Right cardiac atrium (tissue), 5 donors: ENCODE measurements at regions of chr3 and their contacts with region 1.

Region 1: GRCh38 chr3:73502609-73503583 is 121.8 kb downstream of the PDZRN3 start:
- DNase-seq: peak; percentile 73 to 78 (median 75)
- ATAC-seq: peak; percentile 48 to 75
- H3K4me3 ChIP-seq: no peak overlapping the region
- H3K27ac ChIP-seq: no peak overlapping the region
- H3K4me1 ChIP-seq: peaks cover 2% of the 10 kb centered on the region
- H3K27me3 ChIP-seq: no peaks in the 10 kb centered on the region

Region 2: DNA sequence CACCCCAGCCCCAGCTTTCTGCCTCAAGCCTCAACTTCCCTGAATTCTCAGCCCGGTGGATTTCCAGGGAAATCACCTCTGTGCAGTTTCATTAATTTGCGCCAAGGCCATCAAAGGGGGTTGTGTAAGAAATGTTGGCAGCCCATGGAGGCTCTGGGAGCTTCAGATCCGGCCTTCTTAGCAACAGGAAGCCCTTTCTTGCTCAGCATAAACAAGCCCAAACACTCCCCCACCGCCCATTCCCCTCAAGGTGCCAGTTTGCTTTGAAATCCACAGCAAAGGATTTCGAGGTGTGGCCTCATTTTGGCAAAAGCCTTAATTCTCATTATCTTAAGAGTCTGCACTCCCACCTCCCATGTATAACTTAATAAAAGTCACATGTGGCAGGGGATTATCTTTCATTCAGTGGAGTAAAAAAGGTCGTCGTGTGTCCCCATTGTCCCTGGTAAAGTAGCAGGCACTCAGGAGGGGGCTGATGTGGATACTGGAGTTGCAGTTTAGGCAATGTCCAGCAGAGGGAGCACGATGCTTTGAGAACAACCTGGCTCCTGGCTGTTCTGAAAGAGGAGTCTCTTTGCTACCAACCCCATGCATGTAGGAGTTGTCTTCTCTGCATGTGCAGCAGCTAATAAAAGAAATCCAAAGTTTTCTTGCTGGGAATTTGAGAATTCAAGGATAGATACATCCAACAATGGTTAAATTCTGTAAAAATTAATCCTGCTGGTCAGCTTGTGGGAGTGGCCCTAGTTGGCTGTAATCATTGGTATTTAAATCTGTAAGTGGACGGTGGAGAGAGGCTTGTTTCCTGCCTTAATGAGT is 401.9 kb before region 1 on chr3:
- intact Hi-C with region 1: loop called (anchors 2 to 10 kb)
- DNase-seq: peak; percentile 80 to 89 (median 81)
- ATAC-seq: peak; percentile 85 to 87
- H3K4me3 ChIP-seq: no peak overlapping the region
- H3K27ac ChIP-seq: no peak overlapping the region
- H3K4me1 ChIP-seq: no peaks in the 10 kb centered on the region
- H3K27me3 ChIP-seq: no peaks in the 10 kb centered on the region

Region 3: DNA sequence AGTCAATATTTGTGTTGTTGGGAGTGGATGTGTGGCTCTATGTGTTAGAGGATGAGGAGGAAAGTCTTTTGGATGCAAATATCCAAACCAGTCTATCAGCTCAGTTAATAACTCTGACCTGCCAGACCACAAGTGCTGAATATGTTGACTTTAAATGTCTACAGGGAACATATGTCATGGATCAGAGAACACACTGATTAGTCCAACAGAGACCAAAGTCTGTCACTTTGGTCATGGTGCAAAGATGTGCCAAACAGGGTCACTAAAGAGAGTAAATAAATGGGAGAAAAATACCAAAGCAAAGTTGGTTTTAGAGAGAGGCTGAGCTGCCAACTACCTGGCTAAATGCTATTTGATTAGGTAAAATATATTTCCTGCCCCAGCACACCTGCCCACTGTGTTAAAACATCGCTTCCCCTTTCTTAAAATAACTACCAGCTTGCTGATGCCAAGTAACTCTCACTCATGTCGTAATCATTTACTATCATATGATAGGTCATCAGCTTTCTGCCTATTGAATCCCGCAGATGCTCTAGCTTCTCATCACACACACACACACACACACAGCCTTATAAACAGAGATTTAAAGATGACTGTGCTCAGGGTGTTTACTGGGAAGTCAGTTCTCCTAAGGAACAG is 51.5 kb before region 1 on chr3:
- intact Hi-C with region 1: loop called in 2 of 4 experiments (anchors 5 kb)
- DNase-seq: no peak
- ATAC-seq: no peak
- H3K4me3 ChIP-seq: no peak overlapping the region
- H3K27ac ChIP-seq: no peak overlapping the region
- H3K4me1 ChIP-seq: no peaks in the 10 kb centered on the region
- H3K27me3 ChIP-seq: no peaks in the 10 kb centered on the region

Region 4: DNA sequence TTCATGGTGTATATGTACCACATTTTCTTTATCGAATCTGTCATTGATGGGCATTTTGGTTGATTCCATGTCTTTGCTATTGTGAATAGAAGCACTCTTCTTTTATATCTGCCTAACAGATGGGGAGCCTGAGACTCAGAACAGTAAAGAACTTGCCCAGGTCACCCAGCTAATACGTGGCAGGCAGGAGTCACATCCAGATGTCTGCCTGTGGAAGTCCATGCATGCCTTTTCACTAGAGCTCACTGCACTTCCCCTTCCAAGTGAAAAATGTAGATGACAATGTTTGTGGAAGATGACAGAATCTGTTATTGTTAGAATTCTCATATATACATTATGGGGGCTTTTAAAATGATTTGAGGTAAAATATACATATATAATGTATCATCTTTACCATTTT is 43.2 kb before region 1 on chr3:
- intact Hi-C with region 1: loop called in 2 of 4 experiments (anchors 5 kb)
- DNase-seq: no peak
- ATAC-seq: no peak
- H3K4me3 ChIP-seq: no peak overlapping the region
- H3K27ac ChIP-seq: no peak overlapping the region
- H3K4me1 ChIP-seq: peaks cover 4% of the 10 kb centered on the region
- H3K27me3 ChIP-seq: no peaks in the 10 kb centered on the region

Region 5: GRCh38 chr3:73848173-73848906 is 345.4 kb after region 1 on chr3:
- intact Hi-C with region 1: loop called in 2 of 4 experiments (anchors 5 to 10 kb)
- DNase-seq: no peak
- ATAC-seq: peak in 1 of 2 donors; percentile 47
- H3K4me3 ChIP-seq: no peak overlapping the region
- H3K27ac ChIP-seq: no peak overlapping the region
- H3K4me1 ChIP-seq: no peaks in the 10 kb centered on the region
- H3K27me3 ChIP-seq: no peaks in the 10 kb centered on the region

Region 6: GRCh38 chr3:73926360-73927202 is 423.7 kb after region 1 on chr3:
- intact Hi-C with region 1: no loop called
- DNase-seq: no peak
- ATAC-seq: no peak
- H3K4me3 ChIP-seq: no peak overlapping the region
- H3K27ac ChIP-seq: no peak overlapping the region
- H3K4me1 ChIP-seq: no peaks in the 10 kb centered on the region
- H3K27me3 ChIP-seq: no peaks in the 10 kb centered on the region